Vagina (tissue), 2 donors: ENCODE measurements at regions of chr17 and their contacts with region 1.

Region 1: DNA sequence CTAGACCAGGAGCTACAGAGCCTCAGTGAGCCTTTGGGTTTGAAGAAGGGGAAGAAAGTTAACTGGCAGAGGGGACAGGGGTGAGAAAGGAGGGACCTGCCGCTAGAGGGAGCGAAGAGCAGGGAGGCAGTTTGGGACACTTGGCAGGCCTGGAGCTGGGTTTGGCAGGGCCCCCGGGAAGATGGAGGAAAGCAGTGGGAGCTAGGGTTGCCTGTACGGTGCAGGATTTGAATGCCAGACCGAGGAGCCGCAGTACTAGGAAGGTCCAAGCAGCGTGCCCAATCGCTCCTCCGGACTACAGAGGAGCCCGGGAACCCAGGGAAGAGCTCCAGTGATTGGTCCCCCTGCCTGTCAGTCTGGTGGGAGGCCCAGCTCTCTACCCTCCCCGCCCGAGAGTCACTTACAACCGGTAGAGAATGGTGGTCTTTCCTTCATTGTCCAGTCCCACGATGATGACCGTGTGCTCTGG is 1.3 kb downstream of the ARL5C start:
- DNase-seq: no peak
- H3K4me3 ChIP-seq: peak overlapping the region; percentile 51 to 59
- H3K27ac ChIP-seq: peak overlapping the region; percentile 50
- H3K4me1 ChIP-seq: peaks cover 25% of the 10 kb centered on the region
- H3K27me3 ChIP-seq: no peaks in the 10 kb centered on the region
- CTCF ChIP-seq: peak; percentile 48 to 78 (median 69)
- POLR2A ChIP-seq: no peak

Region 2: DNA sequence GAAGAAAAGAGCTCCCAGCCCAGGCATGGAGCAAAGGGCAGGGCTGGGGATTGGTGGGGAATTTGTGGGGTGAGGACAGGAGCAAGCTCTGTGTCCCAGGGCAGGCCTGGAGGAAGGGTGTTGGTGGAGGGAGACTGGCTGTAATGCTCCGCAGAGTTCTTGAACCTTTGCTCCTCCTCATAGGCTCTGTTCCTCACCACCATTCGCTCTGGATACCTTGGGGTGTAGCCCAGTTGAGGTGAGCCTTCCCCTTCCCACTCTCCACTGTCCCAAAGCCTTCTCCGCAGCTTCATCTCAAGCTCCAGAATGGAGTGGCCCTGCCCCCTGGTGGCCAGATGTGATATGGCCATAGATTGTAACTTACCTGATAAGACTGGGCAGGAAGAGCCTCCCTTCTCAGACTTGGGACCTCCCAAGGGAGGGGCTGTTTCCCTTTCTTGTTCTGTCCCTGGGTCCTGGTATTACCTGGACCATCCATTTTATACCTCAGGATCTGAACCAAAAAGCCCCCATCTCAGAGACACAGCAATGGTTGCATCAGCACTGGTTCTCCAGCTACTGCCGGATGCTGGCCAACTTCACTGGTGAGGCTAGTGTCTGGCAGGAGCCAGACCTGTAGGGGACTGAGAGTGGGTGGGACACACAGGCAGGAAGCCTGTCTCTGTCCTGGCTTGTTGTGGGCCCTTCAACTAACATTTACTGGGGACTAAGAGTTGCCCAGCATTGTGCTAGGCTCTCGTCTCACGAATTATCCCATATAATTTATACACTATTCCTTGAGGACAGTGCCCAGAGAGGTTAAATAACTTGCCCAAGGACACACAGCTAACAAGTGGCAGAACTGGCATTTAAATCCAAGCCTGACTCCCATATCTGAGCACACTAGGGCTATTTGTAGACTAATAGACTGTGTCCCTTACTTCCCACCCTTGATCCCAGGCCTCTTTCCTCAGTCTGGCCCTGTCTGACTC is 80.2 kb after region 1 on chr17:
- intact Hi-C with region 1: loop called (anchors 10 kb)
- DNase-seq: no peak
- H3K4me3 ChIP-seq: no peak overlapping the region
- H3K27ac ChIP-seq: no peak overlapping the region
- H3K4me1 ChIP-seq: peaks cover 7% of the 10 kb centered on the region
- H3K27me3 ChIP-seq: no peaks in the 10 kb centered on the region
- CTCF ChIP-seq: peak; percentile 86 to 97 (median 91)
- POLR2A ChIP-seq: no peak

Region 3: GRCh38 chr17:39270923-39271322 is 106.2 kb after region 1 on chr17:
- intact Hi-C with region 1: no loop called
- DNase-seq: no peak
- H3K4me3 ChIP-seq: no peak overlapping the region
- H3K27ac ChIP-seq: no peak overlapping the region
- H3K4me1 ChIP-seq: no peaks in the 10 kb centered on the region
- H3K27me3 ChIP-seq: no peaks in the 10 kb centered on the region
- CTCF ChIP-seq: no peak
- POLR2A ChIP-seq: no peak

Region 4: DNA sequence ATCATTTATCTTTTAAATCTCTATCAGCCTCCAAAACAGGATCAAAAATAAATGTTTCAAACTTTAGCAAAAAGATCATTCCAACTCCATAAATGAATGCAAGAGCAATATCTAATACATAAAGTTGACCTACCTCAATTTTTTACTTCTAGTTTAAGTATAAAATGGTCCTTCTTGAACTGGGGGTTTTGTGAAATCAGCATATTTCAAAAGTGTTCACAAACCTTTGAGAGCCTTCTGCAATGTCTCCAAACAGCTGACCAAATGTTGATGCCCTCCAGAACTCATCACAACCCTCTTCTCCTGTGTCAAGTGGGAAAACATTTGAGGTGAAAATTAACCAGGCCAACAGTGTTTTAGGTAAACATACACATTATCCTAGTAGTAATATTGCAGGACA is 278.6 kb after region 1 on chr17:
- intact Hi-C with region 1: no loop called
- DNase-seq: no peak
- H3K4me3 ChIP-seq: no peak overlapping the region
- H3K27ac ChIP-seq: no peak overlapping the region
- H3K4me1 ChIP-seq: no peaks in the 10 kb centered on the region
- H3K27me3 ChIP-seq: no peaks in the 10 kb centered on the region
- CTCF ChIP-seq: no peak
- POLR2A ChIP-seq: no peak